ENCODE measurements at regions of chr1 and their contacts with region 1.

Region 1: DNA sequence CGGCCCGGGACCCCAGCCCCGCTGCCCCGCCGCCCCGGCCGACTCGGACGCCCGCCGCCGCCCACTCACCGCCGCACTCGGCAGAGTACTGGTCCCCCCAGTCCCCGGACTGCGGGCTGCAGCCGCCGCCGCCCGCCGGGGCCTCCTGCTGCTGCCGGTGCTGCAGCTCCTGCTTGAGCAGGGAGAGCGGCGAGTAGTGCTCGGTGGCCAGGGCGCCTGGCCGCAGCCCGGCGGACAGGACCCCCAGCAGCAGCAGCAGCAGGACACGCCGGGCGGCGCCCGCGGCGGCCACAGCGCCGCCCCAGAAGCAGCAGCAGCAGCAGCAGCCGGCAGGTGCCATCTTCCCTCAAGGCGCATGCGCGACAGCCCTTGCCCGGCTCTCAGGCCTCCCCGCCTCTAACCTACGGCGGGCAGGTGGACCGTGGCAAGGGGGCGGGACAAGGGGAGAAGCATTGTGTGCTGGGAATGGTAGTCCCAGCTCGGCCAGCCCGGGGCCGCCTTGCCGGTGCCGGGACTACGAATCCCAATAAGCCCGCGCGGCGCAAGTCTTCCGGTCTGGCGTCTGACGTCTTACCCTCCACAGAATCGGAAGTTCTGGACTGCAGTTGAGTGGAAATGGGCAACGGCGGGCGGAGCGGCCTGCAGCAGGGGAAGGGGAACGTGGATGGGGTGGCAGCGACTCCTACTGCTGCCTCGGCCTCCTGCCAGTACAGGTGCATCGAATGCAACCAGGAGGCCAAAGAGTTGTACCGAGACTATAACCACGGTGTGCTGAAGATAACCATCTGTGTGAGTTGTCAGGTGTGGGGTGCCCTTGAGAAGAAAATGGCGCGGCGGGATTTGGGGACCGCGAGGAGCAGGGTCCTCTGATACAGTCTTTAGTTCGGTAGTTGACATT is at the starts of genes ARV1 and TTC13:
- DNase-seq: peak; percentile 99
- H3K4me3 ChIP-seq: peak within 1 kb of the TSS; percentile 93
- H3K27ac ChIP-seq: peak within 1 kb of the TSS; percentile 68
- H3K4me1 ChIP-seq: peaks cover 22% of the 10 kb centered on the region
- CTCF ChIP-seq: peak; percentile 76
- total RNA-seq, gene ARV1: 11.7 and 15.1 TPM in 2 replicates
- total RNA-seq, gene TTC13: 15.4 and 24.3 TPM in 2 replicates

Region 2: GRCh38 chr1:230867903-230868735 is 110.6 kb before region 1 on chr1 and contains the start of gene C1orf198:
- CTCF ChIA-PET with region 1: no interaction called
- POLR2A ChIA-PET with region 1: no interaction called
- intact Hi-C with region 1: loop called (anchors 2 kb)
- DNase-seq: peak; percentile 59
- H3K4me3 ChIP-seq: peak within 1 kb of the TSS; percentile 84
- H3K27ac ChIP-seq: no peak within 1 kb of the TSS
- H3K4me1 ChIP-seq: peaks cover 16% of the 10 kb centered on the region
- CTCF ChIP-seq: 0 out of 2 replicates have a peak, but pooled peaks have one; percentile 25
- total RNA-seq, gene C1orf198: 4.9 and 5.7 TPM in 2 replicates

Region 3: GRCh38 chr1:230922620-230923019 is 56.1 kb before region 1 on chr1:
- CTCF ChIA-PET with region 1: no interaction called
- POLR2A ChIA-PET with region 1: interaction called, 4 read pairs
- intact Hi-C with region 1: loop called (anchors 1 kb)
- DNase-seq: peak; percentile 12
- H3K4me3 ChIP-seq: no peak overlapping the region
- H3K27ac ChIP-seq: no peak overlapping the region
- H3K4me1 ChIP-seq: no peaks in the 10 kb centered on the region
- CTCF ChIP-seq: peak; percentile 25; the same call in 1 of the 2 replicates

Region 4: DNA sequence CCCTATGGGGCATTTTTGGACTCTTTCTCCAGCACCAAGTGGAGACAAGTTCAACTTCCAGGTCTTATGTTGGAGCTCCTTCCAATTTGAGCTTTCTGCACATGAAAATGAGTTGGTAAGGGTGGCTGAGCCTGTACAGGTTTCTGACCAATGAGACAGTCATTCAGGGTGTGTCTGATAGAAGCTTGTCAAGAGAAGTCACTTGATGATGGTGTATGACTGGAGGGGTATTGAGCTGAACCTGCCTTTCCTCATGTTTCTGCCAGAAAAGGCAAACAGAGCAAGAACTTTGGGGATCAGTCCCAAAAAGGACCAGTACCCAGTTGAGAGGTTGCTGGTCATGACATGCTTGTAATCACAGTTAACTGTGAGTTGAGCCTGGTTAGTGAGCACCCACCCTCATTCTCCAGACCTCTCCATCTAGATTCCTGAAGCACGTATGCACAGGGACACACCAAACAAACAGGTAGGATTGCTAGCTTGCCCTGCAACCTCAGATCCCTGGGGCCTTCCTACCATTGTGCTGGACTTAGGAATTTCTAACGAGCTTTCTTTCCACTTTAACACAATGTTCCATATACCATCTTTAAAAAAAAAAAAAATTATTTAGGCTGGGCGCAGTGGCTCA is 34.8 kb after region 1 on chr1:
- CTCF ChIA-PET with region 1: no interaction called
- POLR2A ChIA-PET with region 1: no interaction called
- intact Hi-C with region 1: no loop called
- DNase-seq: no peak
- H3K4me3 ChIP-seq: no peak overlapping the region
- H3K27ac ChIP-seq: no peak overlapping the region
- H3K4me1 ChIP-seq: no peaks in the 10 kb centered on the region
- CTCF ChIP-seq: no peak

Region 5: DNA sequence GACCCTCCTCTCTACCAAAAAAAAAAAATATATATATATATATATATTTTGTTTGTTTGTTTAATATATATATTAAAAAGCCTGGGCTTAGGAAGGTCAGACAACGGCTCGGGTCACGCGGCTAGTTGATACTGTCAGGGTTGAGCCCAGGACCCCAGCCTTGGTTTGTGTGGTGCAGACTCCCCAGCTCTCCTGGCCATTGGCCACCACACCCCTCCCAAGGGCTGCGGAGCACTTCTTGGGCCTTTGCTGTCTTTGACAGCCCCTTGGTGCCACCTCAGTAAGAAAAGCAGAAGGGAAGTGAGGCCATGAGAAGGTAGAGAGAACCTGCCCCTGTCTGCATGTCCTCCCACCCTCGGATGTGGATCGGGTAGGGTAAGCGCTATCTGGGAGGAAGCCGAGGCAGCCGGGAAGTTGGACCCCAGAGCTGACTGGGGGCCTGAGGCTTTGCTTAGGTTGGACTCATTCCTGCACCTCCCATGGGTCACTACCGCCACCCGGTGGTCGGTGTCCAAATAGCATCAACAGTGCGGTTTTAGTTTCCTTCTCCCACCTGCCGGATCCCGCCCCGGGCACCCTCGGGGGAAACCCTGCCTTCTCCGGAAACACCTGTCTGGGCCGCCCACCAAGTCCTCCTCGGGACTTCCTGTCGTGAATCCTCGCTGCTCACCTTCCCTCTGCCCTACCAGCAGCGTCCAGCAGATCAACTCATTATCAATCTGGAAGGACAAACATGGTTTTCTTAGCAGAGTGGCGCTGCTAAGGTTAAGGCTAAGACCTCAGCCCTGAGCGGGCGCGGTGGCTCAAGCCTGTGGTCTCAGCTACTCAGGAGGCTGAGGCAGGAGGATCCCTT is 232.5 kb after region 1 on chr1:
- CTCF ChIA-PET with region 1: no interaction called
- POLR2A ChIA-PET with region 1: no interaction called
- intact Hi-C with region 1: loop called (anchors 1 kb)
- DNase-seq: peak; percentile 93
- H3K4me3 ChIP-seq: peak overlapping the region; percentile 54
- H3K27ac ChIP-seq: peak overlapping the region; percentile 31
- H3K4me1 ChIP-seq: peaks cover 32% of the 10 kb centered on the region
- CTCF ChIP-seq: peak; percentile 89